ENCODE measurements at regions of chr5 and their contacts with region 1.

Region 1: DNA sequence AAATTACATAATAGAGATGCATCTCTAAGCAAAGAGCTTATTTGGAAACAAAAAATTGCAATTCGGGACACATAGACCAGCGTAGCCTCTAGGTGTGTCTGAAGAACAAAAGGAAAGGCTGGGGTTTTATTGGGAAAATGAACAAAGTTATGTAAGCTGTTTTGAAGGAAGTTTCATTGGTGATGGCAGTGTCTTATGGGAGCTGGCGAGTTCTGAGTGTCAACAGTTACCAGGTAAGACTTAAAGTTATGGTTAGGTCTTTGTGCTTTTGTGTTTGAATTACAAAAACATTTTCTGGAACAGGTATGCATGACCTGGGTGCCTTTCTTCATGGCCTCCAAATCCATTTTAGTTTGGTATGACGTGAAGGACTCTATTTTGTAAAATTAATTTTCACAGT is 48.9 kb downstream of the SLC27A6 start:
- DNase-seq: no peak
- ATAC-seq: no peak
- H3K4me3 ChIP-seq: no peak overlapping the region
- H3K27ac ChIP-seq: no peak overlapping the region
- H3K4me1 ChIP-seq: no peaks in the 10 kb centered on the region
- H3K27me3 ChIP-seq: no peaks in the 10 kb centered on the region

Region 2: DNA sequence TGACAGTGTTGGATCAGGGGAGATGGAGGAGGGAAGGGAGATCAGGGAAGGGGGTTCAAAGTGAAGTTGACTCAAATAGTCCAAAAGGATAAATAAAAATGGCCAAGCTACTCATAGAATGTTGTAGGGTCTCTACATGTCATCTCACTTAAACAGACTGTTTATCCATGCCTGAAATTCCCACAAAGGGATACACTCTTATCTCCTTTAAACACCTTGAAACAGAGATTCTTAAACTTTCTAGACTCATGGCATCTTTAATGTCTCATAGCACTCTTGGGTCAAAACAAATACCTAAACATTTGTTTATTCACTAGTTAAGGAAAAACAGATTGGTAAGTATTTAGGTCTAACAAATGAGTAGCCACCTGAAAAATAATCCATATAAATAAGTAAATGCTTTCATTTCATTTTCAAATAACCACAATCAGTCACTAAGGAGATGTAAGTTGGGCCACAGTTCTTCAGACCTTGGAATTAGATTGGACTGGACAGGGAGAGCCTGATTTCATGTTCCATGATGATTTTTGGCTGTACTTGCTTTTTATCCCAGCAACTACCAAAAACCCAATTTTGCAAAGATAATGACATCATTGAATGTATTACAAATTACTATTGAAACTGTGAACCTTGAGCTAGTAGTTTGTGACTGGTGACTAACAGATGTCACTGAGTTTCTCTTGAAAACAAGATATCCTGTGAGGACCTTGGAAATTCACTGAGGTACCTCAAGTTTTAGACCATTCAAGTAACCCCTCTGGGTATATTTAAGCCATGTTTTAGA is 17.9 kb after region 1 on chr5:
- intact Hi-C with region 1: loop called in 1 of 2 experiments (anchors 2 kb)
- DNase-seq: no peak
- ATAC-seq: no peak
- H3K4me3 ChIP-seq: no peak overlapping the region
- H3K27ac ChIP-seq: no peak overlapping the region
- H3K4me1 ChIP-seq: no peaks in the 10 kb centered on the region
- H3K27me3 ChIP-seq: no peaks in the 10 kb centered on the region

Measured in aorta (tissue), 5 donors.